ENCODE measurements at regions of chr16 and their contacts with region 1.

Region 1: GRCh38 chr16:14202697-14203096 is 131.6 kb downstream of the MRTFB start:
- DNase-seq: no peak
- ATAC-seq: peak in 2 of 4 donors; percentile 34 to 57
- H3K4me3 ChIP-seq: peak overlapping the region in 8 of 12 donors; percentile 13 to 50 (median 28)
- H3K27ac ChIP-seq: peak overlapping the region in 9 of 12 donors; percentile 11 to 69 (median 31)
- H3K4me1 ChIP-seq: peaks cover 0 to 38% (median 14%) of the 10 kb centered on the region in 12 donors
- H3K27me3 ChIP-seq: no peaks in the 10 kb centered on the region
- CTCF ChIP-seq: peak in 9 of 12 donors; percentile 12 to 66 (median 43)
- POLR2A ChIP-seq: no peak

Region 2: GRCh38 chr16:14215941-14216340 is 13.2 kb after region 1 on chr16:
- intact Hi-C with region 1: no loop called
- DNase-seq: no peak
- ATAC-seq: no peak
- H3K4me3 ChIP-seq: no peak overlapping the region
- H3K27ac ChIP-seq: no peak overlapping the region
- H3K4me1 ChIP-seq: peaks cover 0 to 12% (median 0%) of the 10 kb centered on the region in 12 donors
- H3K27me3 ChIP-seq: no peaks in the 10 kb centered on the region
- CTCF ChIP-seq: no peak
- POLR2A ChIP-seq: no peak

Region 3: GRCh38 chr16:14263011-14263410 is 60.3 kb after region 1 on chr16:
- intact Hi-C with region 1: loop called in 1 of 10 experiments (anchors 10 kb)
- DNase-seq: no peak
- ATAC-seq: no peak
- H3K4me3 ChIP-seq: no peak overlapping the region
- H3K27ac ChIP-seq: no peak overlapping the region
- H3K4me1 ChIP-seq: no peaks in the 10 kb centered on the region
- H3K27me3 ChIP-seq: no peaks in the 10 kb centered on the region
- CTCF ChIP-seq: no peak
- POLR2A ChIP-seq: no peak